ENCODE measurements at regions of chr17 and their contacts with region 1.

Region 1: GRCh38 chr17:57911834-57912673 is 43.2 kb downstream of the CUEDC1 start:
- DNase-seq: peak; percentile 92 to 96
- ATAC-seq: peak; percentile 86 to 97 (median 93)
- H3K4me3 ChIP-seq: peak overlapping the region in 2 of 10 donors; percentile 16 to 24
- H3K27ac ChIP-seq: peak overlapping the region; percentile 4 to 85 (median 72)
- H3K4me1 ChIP-seq: peaks cover 41 to 79% (median 62%) of the 10 kb centered on the region in 9 donors
- H3K27me3 ChIP-seq: no peaks in the 10 kb centered on the region
- CTCF ChIP-seq: no peak

Region 2: DNA sequence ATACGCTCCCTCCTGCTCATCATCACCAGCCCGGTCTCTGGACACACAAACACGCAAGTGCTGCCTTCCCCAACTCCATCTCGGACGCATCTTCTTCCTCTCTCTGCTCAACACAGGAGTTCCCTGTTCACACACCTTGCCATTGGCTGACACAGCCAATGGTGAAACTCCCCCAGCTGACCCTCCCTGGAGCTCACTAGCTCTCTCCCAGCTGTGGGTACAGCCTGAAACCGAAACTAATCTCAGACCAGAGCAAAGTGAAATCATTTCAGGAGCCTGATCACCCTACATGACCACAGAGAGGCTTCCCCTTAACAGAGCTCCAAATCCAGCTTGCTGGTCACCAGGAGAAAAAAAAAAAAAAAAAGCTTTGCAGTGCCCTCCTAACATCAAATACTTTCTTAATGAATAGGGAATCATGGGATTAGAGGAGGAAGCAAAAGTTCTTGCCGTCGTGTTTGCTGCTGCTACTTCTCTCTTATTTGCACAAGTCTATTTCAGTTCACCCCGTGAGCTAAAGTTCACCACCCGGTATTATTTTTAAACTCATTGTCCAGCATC is 34.8 kb after region 1 on chr17:
- intact Hi-C with region 1: loop called in 2 of 10 experiments (anchors 5 kb)
- DNase-seq: peak; percentile 32 to 57
- ATAC-seq: peak; percentile 46 to 82 (median 70)
- H3K4me3 ChIP-seq: peak overlapping the region in 9 of 10 donors; percentile 26 to 54 (median 50)
- H3K27ac ChIP-seq: peak overlapping the region; percentile 57 to 100 (median 83)
- H3K4me1 ChIP-seq: peaks cover 40 to 98% (median 88%) of the 10 kb centered on the region in 9 donors
- H3K27me3 ChIP-seq: no peaks in the 10 kb centered on the region
- CTCF ChIP-seq: no peak